ENCODE measurements at regions of chr10 and their contacts with region 1.

Region 1: GRCh38 chr10:97234400-97234799 is 48.6 kb upstream of the SLIT1 start:
- DNase-seq: peak; percentile 21
- H3K4me3 ChIP-seq: no peak overlapping the region
- H3K27ac ChIP-seq: no peak overlapping the region
- H3K27me3 ChIP-seq: no peaks in the 10 kb centered on the region
- CTCF ChIP-seq: peak; percentile 68

Region 2: DNA sequence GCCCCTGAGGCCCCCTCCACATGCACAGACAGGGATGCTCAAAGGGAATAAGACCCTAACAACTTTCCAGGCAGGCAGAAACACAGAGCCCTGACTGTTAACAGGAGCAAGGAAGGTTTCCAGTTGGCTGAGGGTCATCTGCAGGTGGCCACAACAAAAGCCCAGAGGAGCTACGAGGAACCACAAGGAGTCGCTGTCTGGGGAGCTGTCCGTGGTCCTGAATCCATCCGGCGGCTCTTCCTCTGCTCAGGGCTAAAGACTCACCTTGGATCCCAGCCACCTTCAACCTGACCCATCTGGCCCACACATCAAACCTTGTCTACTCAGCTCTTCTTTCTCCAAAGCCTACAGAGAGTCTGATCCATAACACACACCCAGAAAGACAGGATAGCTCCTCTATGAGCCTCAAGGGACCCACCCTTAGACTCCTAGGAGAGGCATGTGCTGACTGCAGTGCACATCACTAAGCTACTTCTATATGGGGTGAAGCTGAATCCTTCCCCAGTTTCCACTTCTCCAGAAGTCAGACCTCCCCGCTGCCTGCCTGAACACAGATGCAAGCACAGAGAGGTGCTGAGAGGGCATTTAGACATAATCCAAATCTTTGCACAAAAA is 152.7 kb before region 1 on chr10:
- CTCF ChIA-PET with region 1: interaction called, 21 read pairs
- POLR2A ChIA-PET with region 1: no interaction called
- DNase-seq: peak; percentile 29
- H3K4me3 ChIP-seq: no peak overlapping the region
- H3K27ac ChIP-seq: no peak overlapping the region
- H3K27me3 ChIP-seq: peaks cover 14% of the 10 kb centered on the region
- CTCF ChIP-seq: peak; percentile 96

Region 3: DNA sequence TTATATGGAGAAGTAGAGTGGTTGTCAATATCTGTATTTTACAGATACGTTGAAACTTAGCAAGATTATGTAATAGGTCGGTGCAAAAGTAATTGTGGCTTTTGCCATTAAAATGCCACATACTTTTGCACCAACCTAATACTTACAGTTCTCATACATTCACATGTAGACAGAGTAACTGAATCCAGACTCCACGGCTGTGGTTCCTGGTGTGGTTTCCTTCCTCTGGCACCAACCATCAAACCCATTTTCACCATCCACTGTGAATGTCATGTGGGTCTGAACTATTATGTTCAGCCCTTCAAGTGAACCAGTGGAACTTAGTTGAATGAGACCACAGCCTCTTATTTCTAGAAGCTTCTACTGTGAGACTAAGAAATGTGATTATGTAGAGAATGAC is 17.1 kb before region 1 on chr10:
- CTCF ChIA-PET with region 1: interaction called, 55 read pairs
- POLR2A ChIA-PET with region 1: no interaction called
- DNase-seq: no peak
- H3K4me3 ChIP-seq: no peak overlapping the region
- H3K27ac ChIP-seq: no peak overlapping the region
- H3K27me3 ChIP-seq: no peaks in the 10 kb centered on the region
- CTCF ChIP-seq: no peak

Region 4: DNA sequence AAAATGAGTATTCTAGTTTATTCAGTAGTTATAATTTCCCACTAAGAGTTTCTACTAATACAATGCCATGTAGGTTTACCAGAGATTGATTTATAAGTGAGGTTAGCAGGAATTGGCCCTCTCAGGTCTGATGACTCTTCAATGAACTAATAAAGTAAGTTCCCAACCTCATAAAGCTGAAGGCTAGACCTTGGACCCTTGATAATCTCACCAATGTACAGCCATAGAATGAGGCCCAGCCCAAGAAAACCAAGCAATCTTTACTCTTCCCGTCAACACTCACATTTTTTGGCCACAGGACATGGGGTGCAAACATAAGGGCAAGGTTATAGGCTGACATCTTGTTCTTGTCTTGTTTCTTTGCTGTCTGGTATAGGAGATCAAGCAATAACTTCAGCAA is 24.7 kb after region 1 on chr10:
- CTCF ChIA-PET with region 1: interaction called, 12 read pairs
- POLR2A ChIA-PET with region 1: no interaction called
- DNase-seq: no peak
- H3K4me3 ChIP-seq: no peak overlapping the region
- H3K27ac ChIP-seq: no peak overlapping the region
- H3K27me3 ChIP-seq: no peaks in the 10 kb centered on the region
- CTCF ChIP-seq: no peak